Heart left ventricle (tissue), 16 donors: ENCODE measurements at regions of chr7 and their contacts with region 1.

Region 1: DNA sequence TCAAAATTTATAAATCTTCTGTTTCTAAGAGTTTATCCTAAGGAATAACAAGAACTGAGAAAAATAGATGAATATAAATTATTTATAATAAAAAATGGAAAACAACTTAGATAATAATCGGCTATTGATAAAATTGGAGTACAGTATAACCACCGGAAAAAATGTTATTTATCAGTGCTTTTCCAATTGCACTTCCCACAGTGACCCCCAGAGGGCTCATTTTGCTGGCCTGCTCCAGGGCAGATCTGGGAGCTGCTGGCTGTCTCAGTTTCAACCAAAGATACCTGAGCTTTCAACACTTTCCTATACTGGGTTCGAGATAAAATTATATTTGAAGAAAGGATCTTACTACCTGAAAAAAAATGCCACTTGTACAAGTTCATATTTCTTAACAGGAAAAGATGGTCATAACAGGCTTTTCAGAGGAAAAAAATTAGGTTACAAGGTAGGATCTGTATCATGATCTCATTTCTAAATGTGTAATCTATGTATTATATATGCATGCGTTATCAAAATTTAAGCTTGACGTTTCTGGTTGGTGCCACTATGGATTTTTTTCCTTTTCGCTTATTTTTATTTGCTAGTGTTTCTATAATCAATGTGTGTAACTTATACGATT is 165.7 kb downstream of the NPSR1 start:
- DNase-seq: peak in 3 of 5 donors; percentile 32 to 38 (median 36)
- ATAC-seq: peak in 2 of 4 donors; percentile 38 to 63
- H3K4me3 ChIP-seq: no peak overlapping the region
- H3K27ac ChIP-seq: no peak overlapping the region
- H3K4me1 ChIP-seq: no peaks in the 10 kb centered on the region
- H3K27me3 ChIP-seq: no peaks in the 10 kb centered on the region
- CTCF ChIP-seq: peak; percentile 75 to 89 (median 83)
- POLR2A ChIP-seq: no peak

Region 2: GRCh38 chr7:34875481-34875880 is 51.7 kb after region 1 on chr7:
- intact Hi-C with region 1: no loop called
- DNase-seq: no peak
- ATAC-seq: no peak
- H3K4me3 ChIP-seq: no peak overlapping the region
- H3K27ac ChIP-seq: no peak overlapping the region
- H3K4me1 ChIP-seq: no peaks in the 10 kb centered on the region
- H3K27me3 ChIP-seq: no peaks in the 10 kb centered on the region
- CTCF ChIP-seq: no peak
- POLR2A ChIP-seq: no peak

Region 3: GRCh38 chr7:34928049-34928448 is 104.3 kb after region 1 on chr7:
- intact Hi-C with region 1: loop called in 1 of 10 experiments (anchors 10 kb)
- DNase-seq: peak in 4 of 5 donors; percentile 9 to 62 (median 36)
- ATAC-seq: peak in 1 of 4 donors; percentile 36
- H3K4me3 ChIP-seq: no peak overlapping the region
- H3K27ac ChIP-seq: no peak overlapping the region
- H3K4me1 ChIP-seq: no peaks in the 10 kb centered on the region
- H3K27me3 ChIP-seq: no peaks in the 10 kb centered on the region
- CTCF ChIP-seq: peak; percentile 18 to 56 (median 34)
- POLR2A ChIP-seq: no peak

Region 4: DNA sequence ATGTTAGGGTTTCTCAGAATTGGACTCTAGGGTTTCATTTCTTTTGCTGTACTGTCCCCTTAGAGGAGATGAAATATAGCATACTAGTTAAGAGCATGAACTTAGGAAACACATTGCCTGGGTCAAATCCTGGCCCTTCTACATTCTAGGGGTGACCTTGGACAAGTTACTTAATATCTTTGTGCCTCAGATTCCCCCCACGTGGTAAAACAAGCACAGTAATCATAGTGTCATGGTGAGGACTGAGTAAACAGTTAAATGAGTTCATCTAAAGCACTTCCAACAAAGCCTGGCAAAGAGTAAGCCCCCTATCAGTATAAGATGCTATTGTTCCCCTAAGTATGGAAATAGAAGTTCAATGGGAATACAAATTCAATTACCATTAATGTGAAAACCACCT is 208.4 kb after region 1 on chr7:
- intact Hi-C with region 1: loop called in 7 of 10 experiments (anchors 5 to 10 kb)
- DNase-seq: no peak
- ATAC-seq: no peak
- H3K4me3 ChIP-seq: no peak overlapping the region
- H3K27ac ChIP-seq: no peak overlapping the region
- H3K4me1 ChIP-seq: peaks cover 0 to 30% (median 16%) of the 10 kb centered on the region in 12 donors
- H3K27me3 ChIP-seq: no peaks in the 10 kb centered on the region
- CTCF ChIP-seq: no peak
- POLR2A ChIP-seq: no peak

Region 5: DNA sequence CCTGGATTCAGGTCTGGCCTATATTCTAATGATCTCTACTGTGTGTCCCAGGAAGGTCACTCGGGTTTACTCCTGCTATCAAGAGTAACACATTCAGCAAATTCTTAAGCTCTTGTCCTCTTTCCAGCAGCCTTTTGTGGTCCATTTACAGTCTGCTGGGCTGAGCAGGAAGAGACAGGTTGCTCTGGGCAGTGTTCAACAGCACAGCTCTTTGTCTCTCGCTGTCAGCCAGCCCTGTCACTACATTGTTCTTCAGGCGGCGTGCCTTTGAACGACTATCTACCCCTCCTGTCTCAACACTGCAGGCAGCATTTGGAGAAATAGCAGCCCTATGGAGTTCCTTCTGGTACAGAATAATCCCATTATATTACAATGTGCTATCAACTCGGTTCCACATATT is 622.3 kb after region 1 on chr7:
- intact Hi-C with region 1: loop called in 1 of 10 experiments (anchors 10 kb)
- DNase-seq: peak in 4 of 5 donors; percentile 30 to 67 (median 58)
- ATAC-seq: peak; percentile 93 to 97 (median 95)
- H3K4me3 ChIP-seq: no peak overlapping the region
- H3K27ac ChIP-seq: peak overlapping the region in 4 of 12 donors; percentile 6 to 72 (median 37)
- H3K4me1 ChIP-seq: peaks cover 0 to 22% (median 0%) of the 10 kb centered on the region in 12 donors
- H3K27me3 ChIP-seq: no peaks in the 10 kb centered on the region
- CTCF ChIP-seq: no peak
- POLR2A ChIP-seq: no peak

Region 6: DNA sequence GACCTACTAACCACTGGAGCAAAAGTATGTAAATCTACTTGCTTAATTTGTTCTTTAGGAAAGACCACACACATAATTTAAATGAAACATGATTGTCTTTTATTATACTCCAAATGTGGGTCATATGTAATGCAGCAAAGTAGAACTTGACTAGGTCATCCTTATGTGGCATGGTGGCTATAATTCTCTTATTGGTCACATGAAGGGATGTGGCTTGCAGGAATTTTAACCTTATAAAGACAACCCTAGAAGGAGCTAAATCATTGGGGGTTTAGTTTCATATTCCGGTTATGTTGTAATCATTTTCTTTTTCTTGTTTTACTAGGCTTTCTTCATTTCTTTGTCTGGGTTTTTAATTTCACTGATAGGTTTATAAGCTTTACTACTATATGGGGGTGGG is 1071.0 kb after region 1 on chr7:
- intact Hi-C with region 1: no loop called
- DNase-seq: no peak
- ATAC-seq: no peak
- H3K4me3 ChIP-seq: no peak overlapping the region
- H3K27ac ChIP-seq: no peak overlapping the region
- H3K4me1 ChIP-seq: peaks cover 0 to 8% (median 0%) of the 10 kb centered on the region in 12 donors
- H3K27me3 ChIP-seq: no peaks in the 10 kb centered on the region
- CTCF ChIP-seq: no peak
- POLR2A ChIP-seq: no peak